G401 (cell line): ENCODE measurements at regions of chr20 and their contacts with region 1.

Region 1: GRCh38 chr20:6708010-6708409 is 59.5 kb upstream of the BMP2 start:
- DNase-seq: no peak

Region 2: DNA sequence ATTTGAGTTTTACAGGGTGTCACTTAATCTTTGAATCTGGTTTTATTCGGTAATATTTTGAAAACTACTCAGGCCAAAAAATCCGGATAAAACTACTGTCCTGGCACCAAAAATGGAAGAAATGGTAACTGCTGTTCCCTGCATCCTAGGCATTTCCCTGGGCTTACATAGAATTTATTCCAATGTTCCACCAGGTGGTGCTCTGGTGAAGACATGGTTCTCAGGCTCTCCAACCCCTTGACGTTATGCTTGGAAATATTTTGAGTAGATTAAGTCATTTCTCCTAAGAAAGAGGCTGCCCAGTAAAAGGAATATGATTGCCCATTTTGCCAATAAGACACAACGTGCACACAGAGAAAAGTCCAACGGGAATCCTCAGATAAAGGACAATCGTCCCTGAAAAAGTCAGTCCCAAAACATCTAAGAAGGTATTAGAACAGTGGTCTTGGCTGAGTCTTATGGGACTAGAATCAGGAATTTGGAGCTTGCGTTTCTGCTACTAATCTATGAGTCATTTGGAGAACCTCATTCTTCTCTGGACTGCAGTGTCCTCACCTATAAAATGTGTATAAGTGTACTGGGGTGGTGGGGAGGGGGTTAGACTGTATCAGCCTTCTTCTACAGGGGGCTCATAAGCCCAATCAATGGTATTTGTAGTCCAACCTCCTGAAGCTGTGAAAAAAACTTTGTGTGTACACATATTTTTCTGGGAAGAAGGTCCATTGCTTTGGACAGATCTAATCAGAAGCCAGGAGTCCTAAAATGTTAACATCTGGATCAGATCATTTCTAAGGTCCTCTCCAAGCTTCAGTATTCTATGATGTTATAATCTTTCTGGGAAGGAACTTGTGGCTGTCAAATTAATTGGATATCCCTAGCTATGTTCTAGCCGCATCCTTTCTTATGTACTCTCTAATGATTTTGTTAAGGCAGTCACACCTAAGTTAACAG is 71.5 kb before region 1 on chr20:
- in situ Hi-C with region 1: no loop called
- DNase-seq: no peak

Region 3: DNA sequence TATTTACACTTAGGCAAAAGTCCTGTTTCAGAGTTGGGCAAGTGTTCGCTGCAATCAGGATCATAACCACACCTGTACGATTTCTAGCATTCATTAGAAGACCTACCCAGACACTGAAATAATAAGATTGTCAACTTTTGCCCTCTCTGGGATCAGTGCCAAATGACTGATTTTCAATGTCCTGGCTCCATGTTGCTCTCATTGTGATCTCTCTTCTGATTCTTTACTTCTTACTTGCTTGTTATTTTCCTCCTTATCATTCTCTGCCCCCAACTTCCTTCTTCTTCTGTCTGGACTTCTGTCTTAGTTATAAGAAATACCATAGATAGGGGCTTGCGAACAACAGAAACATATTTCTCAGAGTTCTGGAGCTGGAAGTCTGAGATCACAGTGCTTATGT is 34.9 kb before region 1 on chr20:
- in situ Hi-C with region 1: loop called (anchors 5 kb)
- DNase-seq: no peak

Region 4: DNA sequence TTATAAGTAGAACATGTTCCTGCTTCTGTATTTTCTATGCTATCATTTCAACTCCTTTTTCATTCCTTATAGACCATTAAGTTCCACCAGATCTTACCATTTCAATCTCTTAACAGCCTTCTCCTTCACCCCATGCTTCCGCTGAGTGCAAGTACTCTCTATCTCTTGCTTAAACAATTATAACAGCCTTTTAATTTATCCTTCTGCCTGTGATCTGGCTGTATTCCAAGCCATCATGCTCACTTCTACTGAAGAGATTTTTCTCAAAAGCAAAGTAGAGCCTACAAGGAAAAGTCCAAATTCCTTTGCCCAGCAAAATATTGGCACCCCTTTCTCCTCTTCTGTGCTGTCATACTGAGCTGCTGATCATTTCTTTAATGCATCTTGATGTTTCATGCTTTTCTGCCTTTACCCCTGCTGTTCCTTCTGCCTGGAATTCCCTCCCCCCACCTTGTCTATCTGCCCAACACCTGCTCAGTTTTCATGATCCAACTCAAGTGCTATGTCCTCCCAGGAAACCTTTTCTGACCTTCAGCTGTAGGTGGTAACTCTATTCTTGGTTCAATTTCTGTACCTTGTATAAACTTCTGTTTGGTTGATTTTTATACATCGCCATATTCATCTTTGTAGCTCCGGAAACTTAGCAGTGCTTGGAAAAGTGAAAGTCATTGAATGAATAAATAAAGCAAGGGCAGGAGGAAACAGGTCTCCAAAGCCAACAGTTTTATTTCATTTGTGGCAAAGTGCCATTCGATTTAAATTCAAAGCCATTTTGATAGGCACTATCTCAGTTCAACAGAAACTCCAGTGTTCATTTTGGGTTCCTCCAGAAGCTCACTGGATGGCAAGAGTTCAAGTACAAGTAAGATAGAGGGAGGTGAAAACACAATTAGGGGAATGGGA is 48.9 kb after region 1 on chr20:
- in situ Hi-C with region 1: no loop called
- DNase-seq: no peak

Region 5: GRCh38 chr20:6956574-6956973 is 248.6 kb after region 1 on chr20:
- in situ Hi-C with region 1: no loop called
- DNase-seq: no peak